ENCODE measurements at regions of chr3 and their contacts with region 1.

Region 1: GRCh38 chr3:196537319-196537984 is 22.3 kb upstream of the SMCO1 start:
- DNase-seq: peak; percentile 56
- H3K4me3 ChIP-seq: no peak overlapping the region; a peak in 1 of 4 replicates
- H3K27ac ChIP-seq: no peak overlapping the region
- H3K4me1 ChIP-seq: no peaks in the 10 kb centered on the region
- H3K27me3 ChIP-seq: no peaks in the 10 kb centered on the region
- CTCF ChIP-seq: peak; percentile 78
- EP300 ChIP-seq: no peak
- RAD21 ChIP-seq: peak; percentile 61

Region 2: DNA sequence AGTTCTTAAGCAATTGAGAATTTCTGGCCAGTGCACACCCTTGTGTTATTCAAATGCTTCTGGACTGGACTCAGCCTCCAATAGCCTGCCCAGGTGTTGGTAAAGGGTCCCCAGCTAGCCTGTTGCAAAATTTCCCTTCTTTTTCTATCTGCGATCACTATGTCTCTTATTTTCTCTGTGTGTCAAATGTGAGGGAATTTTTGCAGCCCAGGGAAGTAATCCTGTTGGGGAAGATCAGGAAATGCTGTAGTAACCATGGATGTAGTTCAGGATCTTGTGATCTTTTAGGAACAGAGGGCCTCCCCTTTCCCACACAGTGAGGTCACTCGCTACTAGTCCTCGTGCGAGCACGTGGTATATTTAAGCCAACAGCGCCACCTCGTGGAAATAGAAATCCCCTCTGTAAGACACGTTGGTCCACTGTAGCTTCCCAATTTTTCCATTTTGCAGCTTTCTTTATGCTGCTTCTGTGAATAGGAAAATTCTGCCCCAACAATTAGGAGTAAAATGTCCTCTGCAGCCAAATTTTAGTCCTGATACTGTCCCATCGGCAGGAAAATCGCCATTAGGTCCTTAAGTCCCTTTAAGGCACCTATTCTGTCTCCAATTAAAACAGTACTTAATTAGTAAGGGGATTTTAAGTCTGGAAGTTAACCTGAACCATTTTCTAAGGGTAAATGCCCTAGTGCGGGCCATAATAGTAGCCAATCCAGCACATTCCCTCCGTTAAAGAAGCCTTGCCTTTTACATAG is 18.3 kb before region 1 on chr3:
- CTCF ChIA-PET with region 1: interaction called, 11 read pairs
- POLR2A ChIA-PET with region 1: no interaction called
- DNase-seq: peak; percentile 43
- H3K4me3 ChIP-seq: no peak overlapping the region
- H3K27ac ChIP-seq: no peak overlapping the region
- H3K4me1 ChIP-seq: no peaks in the 10 kb centered on the region
- H3K27me3 ChIP-seq: no peaks in the 10 kb centered on the region
- CTCF ChIP-seq: peak; percentile 67
- EP300 ChIP-seq: no peak
- RAD21 ChIP-seq: peak; percentile 64